K562 (cell line): ENCODE measurements at regions of chr1 and their contacts with region 1.

Region 1: DNA sequence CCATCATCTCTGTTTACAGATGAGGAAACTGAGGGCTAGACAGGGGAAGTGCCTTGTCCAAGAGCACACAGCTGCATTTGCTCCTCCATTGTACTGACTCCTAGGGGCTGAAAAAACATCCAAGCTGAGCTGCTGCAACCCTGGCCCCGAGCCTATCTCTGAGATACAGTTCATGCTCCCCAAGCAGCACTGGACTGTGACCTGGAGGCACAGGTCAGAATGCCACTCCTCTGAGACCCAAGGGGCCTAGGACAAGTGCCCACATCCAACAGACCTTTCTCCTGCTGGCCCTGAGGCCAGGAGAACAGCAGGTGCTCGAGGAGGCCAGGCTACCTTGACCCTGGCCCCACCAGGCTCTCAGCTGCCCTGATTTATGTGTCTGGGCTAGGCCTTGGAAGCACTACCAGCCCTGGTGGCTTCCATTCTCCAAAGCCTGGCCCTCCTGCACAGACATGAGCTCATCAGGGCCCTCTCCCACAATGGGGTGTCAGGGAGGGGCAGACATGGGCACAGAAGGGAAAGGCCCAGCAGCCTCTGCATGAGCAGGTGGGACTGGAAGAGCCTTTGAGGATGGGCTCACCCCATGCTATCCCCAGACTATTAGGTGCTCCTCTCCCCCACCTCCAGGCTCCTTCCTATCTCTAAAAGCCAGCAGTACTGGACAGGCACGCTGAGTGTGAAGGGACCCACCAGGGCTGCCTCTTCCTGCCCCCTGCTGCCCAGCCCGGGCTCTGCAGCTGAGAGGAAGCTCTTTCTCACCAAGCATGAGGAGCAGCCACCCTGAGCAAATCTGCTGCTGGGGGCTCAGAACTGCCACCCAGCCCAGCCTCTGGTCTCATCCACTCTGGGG is 18.8 kb downstream of the ADGRB2 start:
- DNase-seq: peak; percentile 86 to 94 (median 92)
- ATAC-seq: peak; percentile 95
- H3K4me3 ChIP-seq: no peak overlapping the region
- H3K27ac ChIP-seq: no peak overlapping the region
- H3K4me1 ChIP-seq: peaks cover 5 to 47% of the 10 kb centered on the region in 2 experiments; a peak in 4 of 5 replicates
- H3K27me3 ChIP-seq: peaks cover 0 to 24% of the 10 kb centered on the region in 2 experiments
- CTCF ChIP-seq: peak; percentile 94 to 98 (median 95)
- EP300 ChIP-seq: no peak
- POLR2A ChIP-seq: no peak
- RAD21 ChIP-seq: peak; percentile 73 to 91

Region 2: GRCh38 chr1:31669786-31670592 is 75.3 kb before region 1 on chr1:
- CTCF ChIA-PET with region 1: interaction called, 27 read pairs
- POLR2A ChIA-PET with region 1: interaction called, 3 read pairs
- in situ Hi-C with region 1: loop called (anchors 5 kb)
- intact Hi-C with region 1: no loop called
- DNase-seq: peak in 3 of 4 experiments; percentile 27 to 42 (median 39)
- ATAC-seq: peak; percentile 50
- H3K4me3 ChIP-seq: no peak overlapping the region
- H3K27ac ChIP-seq: no peak overlapping the region
- H3K4me1 ChIP-seq: peaks cover 0 to 21% of the 10 kb centered on the region in 2 experiments; a peak in 3 of 5 replicates
- H3K27me3 ChIP-seq: peaks cover 54 to 100% of the 10 kb centered on the region in 2 experiments
- CTCF ChIP-seq: no peak
- EP300 ChIP-seq: no peak
- POLR2A ChIP-seq: no peak
- RAD21 ChIP-seq: 0 out of 4 replicates have a peak, but pooled peaks of 1 of the 2 experiments have one; percentile 4